Heart right ventricle (tissue), 16 donors: ENCODE measurements at regions of chr12 and their contacts with region 1.

Region 1: GRCh38 chr12:11171145-11171968 is at the start of gene SMIM10L1:
- DNase-seq: peak; percentile 93
- ATAC-seq: peak; percentile 100
- H3K4me3 ChIP-seq: peak within 1 kb of the TSS; percentile 61 to 98 (median 86)
- H3K27ac ChIP-seq: peak within 1 kb of the TSS; percentile 90 to 99 (median 98)
- H3K4me1 ChIP-seq: peaks cover 3 to 55% (median 38%) of the 10 kb centered on the region in 9 donors
- H3K27me3 ChIP-seq: no peaks in the 10 kb centered on the region
- CTCF ChIP-seq: peak in 2 of 9 donors; percentile 11 to 16
- total RNA-seq, gene SMIM10L1: 14.0 to 23.7 (median 19.3) TPM

Region 2: GRCh38 chr12:10959804-10960203 is 211.6 kb before region 1 on chr12:
- intact Hi-C with region 1: loop called in 3 of 10 experiments (anchors 10 kb)
- DNase-seq: no peak
- ATAC-seq: peak in 2 of 8 donors; percentile 59 to 74
- H3K4me3 ChIP-seq: no peak overlapping the region
- H3K27ac ChIP-seq: no peak overlapping the region
- H3K4me1 ChIP-seq: no peaks in the 10 kb centered on the region
- H3K27me3 ChIP-seq: no peaks in the 10 kb centered on the region
- CTCF ChIP-seq: peak in 5 of 9 donors; percentile 15 to 38 (median 24)

Region 3: DNA sequence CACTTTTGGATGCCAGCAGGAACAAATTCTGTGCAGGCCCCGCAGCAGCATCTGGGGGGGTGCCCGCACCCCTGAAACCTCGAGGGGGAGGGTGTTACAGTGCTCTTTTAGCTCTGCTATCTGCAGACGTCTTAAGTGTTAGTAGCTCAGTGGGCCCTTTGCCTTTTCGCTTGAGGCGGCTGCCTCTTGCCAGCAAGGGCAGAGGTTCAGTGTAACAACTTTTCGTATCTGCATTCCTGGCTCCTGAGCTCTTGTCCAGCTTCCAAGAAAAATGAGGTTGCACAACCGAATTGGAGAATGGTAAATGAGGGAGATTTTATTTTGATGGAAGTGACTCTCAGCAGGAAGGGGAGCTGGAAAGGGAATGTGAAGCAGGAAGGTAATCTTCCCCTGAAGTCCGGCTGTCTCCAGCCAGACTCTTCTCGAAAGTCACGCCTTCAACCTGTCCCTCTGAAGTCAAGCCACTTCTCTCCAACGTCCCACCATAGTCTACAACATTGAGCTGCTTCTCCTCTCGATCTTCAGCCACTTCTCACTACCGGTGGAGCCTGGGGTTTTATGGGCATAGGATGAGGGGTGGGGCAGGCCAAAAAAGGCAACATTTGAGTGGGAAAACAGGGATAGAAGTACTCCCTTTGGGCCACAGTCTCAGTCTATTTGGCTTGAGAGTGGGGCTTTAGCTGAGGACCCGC is 202.4 kb before region 1 on chr12:
- intact Hi-C with region 1: loop called in 1 of 10 experiments (anchors 10 kb)
- DNase-seq: peak; percentile 11 to 17
- ATAC-seq: peak in 6 of 8 donors; percentile 22 to 89 (median 45)
- H3K4me3 ChIP-seq: no peak overlapping the region
- H3K27ac ChIP-seq: no peak overlapping the region
- H3K4me1 ChIP-seq: peaks cover 0 to 18% (median 0%) of the 10 kb centered on the region in 9 donors
- H3K27me3 ChIP-seq: no peaks in the 10 kb centered on the region
- CTCF ChIP-seq: no peak

Region 4: DNA sequence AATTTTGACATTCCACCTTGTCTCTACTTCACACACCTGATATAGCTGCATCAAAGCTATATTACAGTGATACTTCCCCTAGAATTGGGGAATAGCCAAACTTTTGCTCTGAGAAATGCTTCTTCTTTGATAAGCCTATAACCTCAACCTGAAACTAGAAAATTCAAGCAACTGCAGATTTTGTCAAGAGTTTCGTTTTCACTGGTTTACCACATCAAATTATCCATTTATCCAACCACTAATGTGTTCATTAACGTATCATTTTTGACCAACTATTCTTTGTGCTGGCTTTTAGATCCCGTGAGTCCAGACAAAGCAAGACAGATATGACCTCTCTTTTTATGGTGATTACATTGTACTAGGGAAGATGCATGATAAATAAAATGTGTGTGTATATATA is 95.7 kb before region 1 on chr12:
- intact Hi-C with region 1: no loop called
- DNase-seq: no peak
- ATAC-seq: no peak
- H3K4me3 ChIP-seq: no peak overlapping the region
- H3K27ac ChIP-seq: no peak overlapping the region
- H3K4me1 ChIP-seq: peaks cover 0 to 7% (median 0%) of the 10 kb centered on the region in 9 donors
- H3K27me3 ChIP-seq: no peaks in the 10 kb centered on the region
- CTCF ChIP-seq: no peak

Region 5: DNA sequence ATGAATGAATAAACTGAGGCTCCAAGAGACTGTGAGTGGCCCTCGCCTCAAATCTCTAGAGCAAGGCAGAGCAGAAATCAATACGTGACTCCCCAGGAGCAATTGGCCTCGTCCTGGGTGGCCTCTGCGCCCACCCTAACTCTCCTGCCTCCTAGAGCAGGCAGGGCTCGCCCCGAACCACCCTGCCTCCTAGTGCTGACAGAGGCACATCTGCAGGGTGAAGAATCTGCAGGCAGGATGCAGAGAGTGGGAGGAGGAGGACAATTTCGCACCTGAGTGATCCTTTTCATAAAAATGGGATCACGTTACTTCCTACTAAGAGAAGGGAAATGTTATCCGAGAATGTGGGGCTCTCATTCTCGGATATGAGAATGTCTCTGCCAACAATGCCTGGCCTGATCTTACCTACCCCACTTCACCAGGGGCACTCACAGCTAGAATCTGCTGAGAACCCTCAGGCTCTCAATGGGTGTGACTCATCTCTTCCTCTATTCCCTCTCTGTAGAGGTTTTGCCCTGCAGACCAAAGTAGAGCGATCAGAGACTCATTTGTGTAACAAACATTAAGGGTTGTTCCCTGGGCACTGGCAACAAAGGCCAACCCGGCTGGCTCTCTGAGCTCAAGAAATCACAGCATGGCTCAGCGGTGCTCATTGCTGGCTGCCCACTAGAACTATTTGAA is 837.7 kb after region 1 on chr12:
- intact Hi-C with region 1: no loop called
- DNase-seq: no peak
- ATAC-seq: no peak
- H3K4me3 ChIP-seq: no peak overlapping the region
- H3K27ac ChIP-seq: peak overlapping the region in 2 of 10 donors; percentile 31 to 88
- H3K4me1 ChIP-seq: peaks cover 0 to 55% (median 3%) of the 10 kb centered on the region in 9 donors
- H3K27me3 ChIP-seq: no peaks in the 10 kb centered on the region
- CTCF ChIP-seq: no peak